Motor neuron (in vitro differentiated cells): ENCODE measurements at regions of chr3 and their contacts with region 1.

Region 1: DNA sequence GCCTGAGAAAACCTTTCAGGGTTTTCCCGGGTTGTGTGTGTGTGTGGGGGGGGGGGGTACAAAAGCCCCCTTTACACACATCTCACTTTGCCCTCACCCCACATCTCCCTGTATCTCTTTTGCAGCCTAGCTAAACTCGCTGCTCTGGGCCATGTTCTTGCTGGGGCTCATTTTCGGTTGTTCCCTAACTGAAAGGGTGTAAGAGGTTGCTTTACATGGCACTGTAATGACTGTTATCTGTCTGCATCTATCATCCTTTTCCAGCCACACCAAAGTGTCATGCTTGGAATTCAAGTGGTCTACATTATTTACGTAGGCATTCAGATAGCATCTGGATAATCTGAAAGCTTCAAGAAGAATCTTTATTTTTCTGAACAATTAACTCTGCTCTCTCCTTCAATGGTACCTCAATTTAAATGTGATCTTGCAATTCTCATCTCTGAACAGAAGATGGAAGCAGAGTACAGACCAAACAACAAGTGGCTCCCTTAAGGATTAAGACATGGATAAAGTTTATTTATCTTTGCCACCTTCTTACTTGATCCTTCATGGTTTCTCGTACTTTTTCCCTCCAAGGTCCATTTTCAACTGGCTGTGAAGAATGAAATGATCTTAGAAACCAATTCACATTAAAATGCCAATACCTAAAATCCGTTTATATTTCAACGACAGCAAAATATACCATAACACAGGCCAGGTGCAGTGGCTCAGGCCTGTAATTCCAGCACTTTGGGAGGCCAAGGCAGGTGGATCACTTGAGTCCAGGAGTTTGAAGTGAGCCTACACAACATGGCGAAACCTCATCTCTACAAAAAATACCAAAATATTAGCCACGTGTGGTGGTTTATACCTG is 34.9 kb downstream of the DCLK3 start:
- ATAC-seq: peak in 7 of 8 experiments; percentile 48 to 81 (median 70)
- H3K4me3 ChIP-seq: no peak overlapping the region
- H3K27ac ChIP-seq: no peak overlapping the region
- H3K4me1 ChIP-seq: peaks cover 8 to 15% of the 10 kb centered on the region in 2 donors

Region 2: DNA sequence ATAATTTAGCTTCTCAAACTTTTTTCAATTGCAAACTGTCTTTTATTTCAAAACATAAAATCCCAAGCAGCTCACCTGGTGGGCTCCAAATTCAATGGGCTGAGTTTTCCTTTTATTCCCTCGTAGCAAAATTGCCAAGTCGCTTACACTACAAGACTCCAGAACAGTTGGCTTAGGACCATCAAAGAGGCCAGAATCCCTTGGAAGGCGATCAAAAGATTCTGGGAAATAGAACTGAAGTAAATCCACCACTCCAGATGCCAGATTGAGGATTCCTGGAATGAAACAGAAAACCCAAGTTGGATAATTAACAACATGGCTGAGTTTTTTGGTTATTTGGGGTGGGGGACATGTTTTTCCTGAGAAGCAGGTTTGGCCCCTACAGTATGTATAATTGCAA is 122.6 kb after region 1 on chr3:
- in situ Hi-C with region 1: loop called in 4 of 9 experiments (anchors 10 to 25 kb)
- ATAC-seq: no peak
- H3K4me3 ChIP-seq: no peak overlapping the region
- H3K27ac ChIP-seq: no peak overlapping the region
- H3K4me1 ChIP-seq: no peaks in the 10 kb centered on the region

Region 3: DNA sequence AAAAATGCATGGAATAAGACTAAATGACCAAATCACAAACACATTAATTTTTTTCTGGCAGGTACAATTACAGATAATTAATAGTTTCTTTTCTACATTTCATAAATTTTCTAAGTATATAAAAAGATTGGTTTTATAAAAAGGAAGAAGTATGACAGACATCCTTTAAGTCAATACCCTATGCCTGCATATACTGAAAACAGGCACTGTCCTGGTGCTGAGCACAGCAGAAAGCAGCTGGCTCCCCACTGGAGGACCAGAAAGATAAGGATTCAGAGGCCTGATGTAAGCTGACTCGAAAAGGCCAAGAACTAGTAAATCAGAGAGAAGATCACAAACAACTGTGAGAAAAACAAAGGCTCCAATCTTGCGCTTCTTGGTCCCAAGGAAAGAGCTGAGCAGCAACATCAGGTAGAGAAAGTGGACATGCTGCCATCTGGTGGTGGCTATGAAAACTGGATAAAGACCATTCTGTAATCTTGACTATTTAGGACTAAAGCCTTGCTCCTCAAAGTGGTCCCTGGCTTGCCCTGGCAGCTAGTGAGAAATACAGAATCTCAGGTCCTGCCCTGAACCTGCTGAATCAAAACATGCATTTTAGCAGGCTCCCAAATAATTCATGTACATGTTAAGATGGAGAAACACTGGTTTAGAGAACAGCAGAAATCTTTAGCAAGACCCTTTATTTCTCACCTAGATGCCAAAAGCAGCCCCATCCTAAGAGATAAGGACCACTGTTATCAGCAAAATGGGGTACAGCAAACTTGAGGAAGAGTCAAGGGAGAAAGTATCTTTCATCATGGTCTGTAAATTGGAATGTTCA is 139.4 kb after region 1 on chr3:
- in situ Hi-C with region 1: loop called in 5 of 9 experiments (anchors 5 to 25 kb)
- ATAC-seq: peak; percentile 74 to 94 (median 83)
- H3K4me3 ChIP-seq: no peak overlapping the region
- H3K27ac ChIP-seq: no peak overlapping the region
- H3K4me1 ChIP-seq: peaks cover 2% of the 10 kb centered on the region in 2 donors

Region 4: GRCh38 chr3:36969540-36970432 is 240.4 kb after region 1 on chr3:
- in situ Hi-C with region 1: loop called in 3 of 9 experiments (anchors 25 kb)
- ATAC-seq: peak in 7 of 8 experiments; percentile 83 to 99 (median 99)
- H3K4me3 ChIP-seq: no peak overlapping the region
- H3K27ac ChIP-seq: peak overlapping the region; percentile 56 to 64
- H3K4me1 ChIP-seq: peaks cover 15 to 17% of the 10 kb centered on the region in 2 donors